Activated CD4-positive, alpha-beta T cell treated with anti-CD3 and anti-CD28 coated beads for 36 hours (primary cell): ENCODE measurements at regions of chr11 and their contacts with region 1.

Region 1: GRCh38 chr11:67648140-67649123 is 2.1 kb downstream of the ACY3 start:
- DNase-seq: peak; percentile 84
- ATAC-seq: peak; percentile 93
- H3K4me3 Mint-ChIP-seq: no peak overlapping the region
- H3K27ac Mint-ChIP-seq: no peak overlapping the region
- H3K4me1 Mint-ChIP-seq: peaks cover 36% of the 10 kb centered on the region
- H3K27me3 Mint-ChIP-seq: no peaks in the 10 kb centered on the region

Region 2: GRCh38 chr11:67705264-67705663 is 56.8 kb after region 1 on chr11:
- CTCF ChIA-PET with region 1: interaction called, 3 read pairs
- POLR2A ChIA-PET with region 1: no interaction called
- intact Hi-C with region 1: loop called in 1 of 2 experiments (anchors 5 kb)
- DNase-seq: no peak
- ATAC-seq: no peak
- H3K4me3 Mint-ChIP-seq: no peak overlapping the region
- H3K27ac Mint-ChIP-seq: no peak overlapping the region
- H3K4me1 Mint-ChIP-seq: no peaks in the 10 kb centered on the region
- H3K27me3 Mint-ChIP-seq: peaks cover 3% of the 10 kb centered on the region